Activated CD4-positive, alpha-beta memory T cell treated with anti-CD3 and anti-CD28 coated beads for 36 hours (primary cell): ENCODE measurements at regions of chr3 and their contacts with region 1.

Region 1: GRCh38 chr3:122356415-122356814 is 26.6 kb downstream of the MIX23 start:
- DNase-seq: peak; percentile 54
- H3K4me3 Mint-ChIP-seq: no peak overlapping the region
- H3K27ac Mint-ChIP-seq: no peak overlapping the region
- H3K4me1 Mint-ChIP-seq: no peaks in the 10 kb centered on the region
- H3K27me3 Mint-ChIP-seq: no peaks in the 10 kb centered on the region

Region 2: DNA sequence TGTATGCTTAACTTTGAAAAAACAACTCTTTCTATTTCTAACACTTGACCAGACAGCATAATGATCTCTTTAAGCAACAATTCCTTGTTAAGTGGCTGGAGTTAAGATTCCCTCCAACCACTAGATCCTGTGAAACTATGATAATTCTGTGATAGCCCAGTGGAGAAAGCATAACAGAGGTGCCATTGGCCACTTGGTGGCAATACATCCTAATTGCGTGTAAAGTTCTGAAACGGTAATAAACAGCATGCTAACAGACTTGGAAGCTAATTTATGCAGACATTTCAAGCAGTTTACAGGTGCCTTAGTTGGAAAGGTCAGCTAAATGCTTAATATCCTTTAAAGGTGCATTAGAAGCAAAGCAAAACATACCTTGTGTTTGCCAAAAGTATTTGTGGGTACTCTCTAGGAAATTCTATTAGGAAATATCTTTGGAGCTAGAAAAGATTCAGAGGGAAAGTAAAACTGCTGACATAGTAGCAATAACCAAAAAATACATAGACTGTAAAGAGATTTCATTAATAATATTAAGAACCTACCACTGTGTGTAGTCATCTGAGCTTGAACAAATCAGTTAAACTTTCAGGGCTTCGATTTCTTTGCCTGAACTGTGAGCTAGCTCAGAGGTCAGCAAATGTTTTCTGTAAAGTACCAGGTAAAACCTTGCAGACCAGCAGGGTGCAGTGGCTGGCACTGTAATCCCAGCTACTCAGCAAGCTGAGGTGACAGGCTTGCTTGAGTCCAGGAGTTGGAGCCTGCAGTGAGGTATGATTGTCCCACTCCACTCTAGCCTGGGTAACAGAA is 50.4 kb before region 1 on chr3:
- CTCF ChIA-PET with region 1: interaction called, 4 read pairs
- POLR2A ChIA-PET with region 1: no interaction called
- intact Hi-C with region 1: loop called (anchors 1 kb)
- DNase-seq: peak; percentile 20
- H3K4me3 Mint-ChIP-seq: no peak overlapping the region
- H3K27ac Mint-ChIP-seq: no peak overlapping the region
- H3K4me1 Mint-ChIP-seq: no peaks in the 10 kb centered on the region
- H3K27me3 Mint-ChIP-seq: no peaks in the 10 kb centered on the region